ENCODE measurements at regions of chr1 and their contacts with region 1.

Region 1: GRCh38 chr1:46527474-46528296 is 23.8 kb downstream of the KNCN start:
- DNase-seq: peak; percentile 67 to 87 (median 85)
- ATAC-seq: peak; percentile 87 to 93 (median 92)
- H3K4me3 ChIP-seq: no peak overlapping the region
- H3K27ac ChIP-seq: no peak overlapping the region
- H3K4me1 ChIP-seq: no peaks in the 10 kb centered on the region
- H3K27me3 ChIP-seq: no peaks in the 10 kb centered on the region
- CTCF ChIP-seq: peak; percentile 80 to 89 (median 84)

Region 2: GRCh38 chr1:46446646-46447498 is 80.8 kb before region 1 on chr1:
- intact Hi-C with region 1: loop called in 1 of 3 experiments (anchors 2 kb)
- DNase-seq: peak; percentile 62 to 93 (median 82)
- ATAC-seq: peak; percentile 44 to 76 (median 73)
- H3K4me3 ChIP-seq: no peak overlapping the region
- H3K27ac ChIP-seq: no peak overlapping the region
- H3K4me1 ChIP-seq: peaks cover 0 to 5% (median 0%) of the 10 kb centered on the region in 3 donors
- H3K27me3 ChIP-seq: no peaks in the 10 kb centered on the region
- CTCF ChIP-seq: peak; percentile 73 to 92 (median 84)

Region 3: GRCh38 chr1:46480959-46481646 is 46.6 kb before region 1 on chr1:
- intact Hi-C with region 1: loop called in 2 of 3 experiments (anchors 2 to 5 kb)
- DNase-seq: no peak
- ATAC-seq: no peak
- H3K4me3 ChIP-seq: no peak overlapping the region
- H3K27ac ChIP-seq: no peak overlapping the region
- H3K4me1 ChIP-seq: no peaks in the 10 kb centered on the region
- H3K27me3 ChIP-seq: no peaks in the 10 kb centered on the region
- CTCF ChIP-seq: no peak

Region 4: GRCh38 chr1:47298025-47298699 is 770.5 kb after region 1 on chr1:
- intact Hi-C with region 1: no loop called
- DNase-seq: no peak
- ATAC-seq: no peak
- H3K4me3 ChIP-seq: no peak overlapping the region
- H3K27ac ChIP-seq: no peak overlapping the region
- H3K4me1 ChIP-seq: no peaks in the 10 kb centered on the region
- H3K27me3 ChIP-seq: no peaks in the 10 kb centered on the region
- CTCF ChIP-seq: no peak

Measured in pancreas (tissue), 10 donors.